Activated CD8-positive, alpha-beta T cell treated with anti-CD3 and anti-CD28 coated beads, Interleukin-2, amount 10 ng/mL, durations not matched to agents 7 days and 5 days (primary cell): ENCODE measurements at regions of chr1 and their contacts with region 1.

Region 1: GRCh38 chr1:27616441-27616840 is 12.5 kb upstream of the AHDC1 start:
- DNase-seq: no peak
- ATAC-seq: no peak
- H3K4me3 Mint-ChIP-seq: no peak overlapping the region
- H3K27ac Mint-ChIP-seq: no peak overlapping the region
- H3K4me1 Mint-ChIP-seq: peaks cover 49% of the 10 kb centered on the region
- H3K27me3 Mint-ChIP-seq: peaks cover 5% of the 10 kb centered on the region

Region 2: DNA sequence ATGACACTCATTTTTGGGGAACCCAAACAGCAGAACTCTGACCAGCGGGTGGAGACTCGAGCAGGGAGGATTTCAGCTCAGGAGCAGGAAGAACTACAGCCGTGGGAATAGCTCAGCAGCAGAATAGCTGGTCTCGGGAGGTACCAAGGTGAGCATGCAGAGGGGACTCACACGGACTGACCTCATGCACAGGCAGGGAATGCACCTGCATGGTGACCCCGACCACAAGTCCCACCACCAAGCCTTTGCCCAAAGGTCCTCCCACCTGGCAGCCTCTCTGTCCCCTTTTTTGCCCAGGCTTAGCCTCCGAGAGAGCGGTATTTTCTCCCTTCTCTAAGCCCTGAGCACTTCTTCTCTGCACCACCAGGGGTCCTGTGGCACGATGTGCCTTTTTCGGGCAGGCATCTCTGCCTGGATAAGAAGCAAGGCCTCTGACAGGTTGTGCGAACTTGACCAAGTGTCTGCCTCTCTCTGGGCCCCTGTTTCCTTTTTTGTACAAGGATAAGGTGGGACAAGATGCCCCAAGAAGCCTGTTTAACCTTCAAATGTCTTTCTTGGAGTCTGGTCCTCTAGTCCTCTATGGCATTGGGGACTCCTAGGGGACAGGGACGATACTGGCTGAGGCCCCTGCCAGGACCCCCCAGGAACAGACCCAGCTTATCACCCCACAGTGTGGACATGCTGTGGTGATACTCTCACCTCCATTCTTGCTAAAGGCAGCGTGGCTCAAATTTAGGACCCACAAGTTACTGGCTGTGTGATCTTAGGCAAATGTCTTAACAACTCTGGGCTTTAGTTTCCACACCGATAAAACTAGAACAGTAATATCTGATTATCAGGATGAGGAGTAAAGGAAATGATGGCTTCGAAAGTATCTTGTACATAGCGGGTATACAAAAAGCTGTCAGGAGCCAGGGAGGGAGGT is 27.5 kb after region 1 on chr1:
- CTCF ChIA-PET with region 1: interaction called, 12 read pairs
- POLR2A ChIA-PET with region 1: no interaction called
- DNase-seq: peak; percentile 76
- ATAC-seq: peak; percentile 97
- H3K4me3 Mint-ChIP-seq: no peak overlapping the region
- H3K27ac Mint-ChIP-seq: no peak overlapping the region
- H3K4me1 Mint-ChIP-seq: peaks cover 21% of the 10 kb centered on the region
- H3K27me3 Mint-ChIP-seq: no peaks in the 10 kb centered on the region